ENCODE measurements at regions of chr15 and their contacts with region 1.

Region 1: GRCh38 chr15:40289140-40289775 is 6.4 kb upstream of the ANKRD63 start:
- DNase-seq: peak in 2 of 5 donors; percentile 55 to 71
- ATAC-seq: peak in 1 of 4 donors; percentile 41
- H3K4me3 ChIP-seq: no peak overlapping the region
- H3K27ac ChIP-seq: no peak overlapping the region
- H3K4me1 ChIP-seq: peaks cover 0 to 53% (median 23%) of the 10 kb centered on the region in 12 donors
- H3K27me3 ChIP-seq: no peaks in the 10 kb centered on the region
- CTCF ChIP-seq: peak in 3 of 12 donors; percentile 4 to 28 (median 18)
- POLR2A ChIP-seq: no peak

Region 2: DNA sequence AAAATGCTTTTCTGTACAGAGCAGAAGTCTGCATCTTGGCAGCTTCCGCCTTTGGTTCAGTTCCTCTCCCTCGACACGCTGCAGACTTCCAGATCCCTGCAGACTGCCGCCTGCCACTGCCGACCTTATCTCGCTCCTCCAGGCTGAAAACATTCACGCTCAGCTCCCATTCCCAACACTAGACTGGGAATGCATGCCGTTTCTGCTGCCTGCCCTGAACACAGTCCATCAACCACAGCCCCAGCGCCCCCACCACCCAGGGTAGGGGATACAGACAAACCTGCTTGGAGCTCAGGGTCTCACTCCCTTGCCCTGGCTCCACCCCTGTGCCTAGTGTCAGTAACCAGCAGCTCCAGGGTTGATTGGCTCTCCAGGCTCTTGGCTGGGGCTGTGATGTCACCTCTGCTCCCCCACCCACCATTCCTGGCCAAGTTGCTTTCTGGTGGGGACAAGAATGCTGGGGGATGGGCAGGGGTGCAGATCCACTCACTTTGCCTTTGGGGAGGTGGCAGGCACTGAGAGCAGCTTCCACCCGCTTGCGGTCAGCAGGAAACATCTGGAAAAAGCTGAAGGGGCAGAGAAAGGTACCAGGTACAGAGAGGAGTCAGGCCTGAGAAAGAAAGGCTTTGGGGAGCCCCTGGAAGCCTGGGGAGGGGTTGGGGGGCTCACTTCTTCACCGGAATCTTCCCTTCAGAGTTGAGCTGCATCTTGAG is 12.4 kb after region 1 on chr15:
- intact Hi-C with region 1: loop called in 2 of 10 experiments (anchors 1 to 2 kb)
- DNase-seq: peak in 2 of 5 donors; percentile 38 to 56
- ATAC-seq: peak; percentile 38 to 67 (median 53)
- H3K4me3 ChIP-seq: no peak overlapping the region
- H3K27ac ChIP-seq: peak overlapping the region in 5 of 12 donors; percentile 3 to 52 (median 37)
- H3K4me1 ChIP-seq: peaks cover 0 to 27% (median 8%) of the 10 kb centered on the region in 12 donors
- H3K27me3 ChIP-seq: no peaks in the 10 kb centered on the region
- CTCF ChIP-seq: no peak
- POLR2A ChIP-seq: no peak